Endothelial cell of umbilical vein (primary cell): ENCODE measurements at regions of chr9 and their contacts with region 1.

Region 1: GRCh38 chr9:98736226-98736625 is 27.5 kb upstream of the GABBR2 start:
- DNase-seq: no peak
- H3K4me3 ChIP-seq: no peak overlapping the region
- H3K27ac ChIP-seq: no peak overlapping the region
- H3K4me1 ChIP-seq: no peaks in the 10 kb centered on the region
- H3K27me3 ChIP-seq: no peaks in the 10 kb centered on the region
- CTCF ChIP-seq: no peak
- POLR2A ChIP-seq: no peak

Region 2: GRCh38 chr9:98766586-98766985 is 30.4 kb after region 1 on chr9:
- CTCF ChIA-PET with region 1: no interaction called
- POLR2A ChIA-PET with region 1: no interaction called
- dilution Hi-C with region 1: no loop called
- intact Hi-C with region 1: loop called (anchors 1 kb)
- DNase-seq: no peak
- H3K4me3 ChIP-seq: no peak overlapping the region
- H3K27ac ChIP-seq: no peak overlapping the region
- H3K4me1 ChIP-seq: no peaks in the 10 kb centered on the region
- H3K27me3 ChIP-seq: no peaks in the 10 kb centered on the region
- CTCF ChIP-seq: no peak
- POLR2A ChIP-seq: no peak